ENCODE measurements at regions of chr10 and their contacts with region 1.

Region 1: DNA sequence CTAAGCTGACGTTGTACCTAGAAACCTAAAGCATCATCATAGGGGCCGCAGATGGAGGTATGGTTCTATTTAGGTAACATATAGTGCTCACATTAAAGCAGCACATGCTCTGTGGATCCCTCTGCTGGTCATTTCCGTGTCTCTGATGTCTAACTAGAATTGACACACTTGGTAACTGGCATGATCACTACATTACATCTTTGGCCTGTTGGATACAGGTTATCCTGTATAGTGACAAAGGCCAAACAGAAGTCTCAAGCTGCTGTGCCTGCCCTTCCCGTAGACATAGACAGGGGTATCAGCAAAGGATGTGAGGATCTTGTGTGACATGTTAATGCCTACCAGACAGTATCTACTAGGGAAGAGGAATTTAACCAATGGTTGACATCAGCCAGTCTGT is 51.2 kb downstream of the KIF5B start:
- DNase-seq: peak; percentile 53
- ATAC-seq: peak; percentile 65
- H3K4me3 ChIP-seq: no peak overlapping the region
- H3K27ac ChIP-seq: no peak overlapping the region
- H3K4me1 ChIP-seq: no peaks in the 10 kb centered on the region
- H3K27me3 ChIP-seq: no peaks in the 10 kb centered on the region
- CTCF ChIP-seq: peak; percentile 58
- POLR2A ChIP-seq: no peak
- RAD21 ChIP-seq: peak; percentile 64

Region 2: DNA sequence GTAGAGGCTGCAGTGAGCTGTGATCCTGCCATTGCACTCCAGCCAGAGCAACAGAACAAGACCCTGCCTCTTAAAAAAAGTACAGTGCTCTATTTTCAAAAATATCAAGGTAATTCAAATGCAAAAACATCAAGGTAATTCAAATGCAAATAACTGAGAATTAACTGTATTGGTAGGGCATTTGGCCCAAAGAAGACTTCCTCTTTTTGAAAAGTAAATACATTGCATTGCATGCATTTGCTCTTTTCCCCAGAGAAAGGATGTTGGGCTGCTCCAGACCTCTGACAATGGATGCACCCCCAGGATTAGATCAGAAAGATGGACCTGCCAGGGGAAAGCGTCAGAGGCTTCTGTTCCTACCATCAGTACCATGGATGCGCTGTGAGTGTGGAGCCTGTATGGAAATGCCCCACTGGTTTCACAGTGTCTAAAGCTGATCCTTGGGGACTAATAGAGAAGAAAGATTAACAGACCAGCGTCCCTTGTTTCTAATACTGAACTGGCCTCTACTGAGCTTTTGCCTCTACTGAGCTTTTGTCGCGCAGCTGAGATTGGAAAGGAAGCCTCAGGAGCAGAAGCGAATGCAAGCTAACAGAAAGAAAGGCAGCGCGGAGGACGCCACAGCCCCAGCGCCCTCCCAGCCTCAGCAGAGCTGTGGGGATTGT is 1282.0 kb before region 1 on chr10:
- CTCF ChIA-PET with region 1: no interaction called
- POLR2A ChIA-PET with region 1: no interaction called
- dilution Hi-C with region 1: no loop called
- in situ Hi-C with region 1: no loop called
- intact Hi-C with region 1: loop called (anchors 10 kb)
- DNase-seq: no peak
- ATAC-seq: no peak
- H3K4me3 ChIP-seq: no peak overlapping the region
- H3K27ac ChIP-seq: no peak overlapping the region
- H3K4me1 ChIP-seq: peaks cover 2% of the 10 kb centered on the region; the same call in 1 of the 2 replicates
- H3K27me3 ChIP-seq: peaks cover 5% of the 10 kb centered on the region
- CTCF ChIP-seq: no peak
- POLR2A ChIP-seq: no peak
- RAD21 ChIP-seq: no peak

Region 3: GRCh38 chr10:31836569-31837406 is 168.3 kb before region 1 on chr10:
- CTCF ChIA-PET with region 1: no interaction called
- POLR2A ChIA-PET with region 1: no interaction called
- dilution Hi-C with region 1: no loop called
- in situ Hi-C with region 1: no loop called
- intact Hi-C with region 1: loop called (anchors 5 kb)
- DNase-seq: peak; percentile 48
- ATAC-seq: peak; percentile 65
- H3K4me3 ChIP-seq: no peak overlapping the region
- H3K27ac ChIP-seq: no peak overlapping the region
- H3K4me1 ChIP-seq: no peaks in the 10 kb centered on the region
- H3K27me3 ChIP-seq: no peaks in the 10 kb centered on the region
- CTCF ChIP-seq: peak; percentile 71
- POLR2A ChIP-seq: no peak
- RAD21 ChIP-seq: peak; percentile 80

Region 4: GRCh38 chr10:31855033-31855432 is 150.0 kb before region 1 on chr10:
- CTCF ChIA-PET with region 1: no interaction called
- POLR2A ChIA-PET with region 1: no interaction called
- dilution Hi-C with region 1: no loop called
- in situ Hi-C with region 1: loop called (anchors 5 kb)
- intact Hi-C with region 1: no loop called
- DNase-seq: no peak
- ATAC-seq: no peak
- H3K4me3 ChIP-seq: no peak overlapping the region
- H3K27ac ChIP-seq: no peak overlapping the region
- H3K4me1 ChIP-seq: no peaks in the 10 kb centered on the region
- H3K27me3 ChIP-seq: no peaks in the 10 kb centered on the region
- CTCF ChIP-seq: no peak
- POLR2A ChIP-seq: no peak
- RAD21 ChIP-seq: no peak

Region 5: GRCh38 chr10:31864834-31865518 is 140.1 kb before region 1 on chr10:
- CTCF ChIA-PET with region 1: interaction called, 5 read pairs
- POLR2A ChIA-PET with region 1: no interaction called
- dilution Hi-C with region 1: no loop called
- in situ Hi-C with region 1: no loop called
- intact Hi-C with region 1: loop called (anchors 2 kb)
- DNase-seq: peak; percentile 54
- ATAC-seq: peak; percentile 69
- H3K4me3 ChIP-seq: peak overlapping the region; percentile 22; the same call in 1 of the 2 replicates
- H3K27ac ChIP-seq: no peak overlapping the region
- H3K4me1 ChIP-seq: peaks cover 6% of the 10 kb centered on the region
- H3K27me3 ChIP-seq: no peaks in the 10 kb centered on the region
- CTCF ChIP-seq: no peak
- POLR2A ChIP-seq: no peak
- RAD21 ChIP-seq: no peak

Region 6: GRCh38 chr10:31928549-31929260 is 76.3 kb before region 1 on chr10 and contains the start of gene ARHGAP12:
- CTCF ChIA-PET with region 1: interaction called, 4 read pairs
- POLR2A ChIA-PET with region 1: no interaction called
- dilution Hi-C with region 1: no loop called
- in situ Hi-C with region 1: no loop called
- intact Hi-C with region 1: loop called (anchors 1 kb)
- DNase-seq: peak; percentile 77
- ATAC-seq: peak; percentile 85
- H3K4me3 ChIP-seq: peak within 1 kb of the TSS; percentile 71
- H3K27ac ChIP-seq: peak within 1 kb of the TSS; percentile 91
- H3K4me1 ChIP-seq: peaks cover 4% of the 10 kb centered on the region
- H3K27me3 ChIP-seq: no peaks in the 10 kb centered on the region
- CTCF ChIP-seq: no peak
- POLR2A ChIP-seq: peak; percentile 85
- RAD21 ChIP-seq: no peak
- total RNA-seq, gene ARHGAP12: 28.5 and 42.2 TPM in 2 replicates

Region 7: DNA sequence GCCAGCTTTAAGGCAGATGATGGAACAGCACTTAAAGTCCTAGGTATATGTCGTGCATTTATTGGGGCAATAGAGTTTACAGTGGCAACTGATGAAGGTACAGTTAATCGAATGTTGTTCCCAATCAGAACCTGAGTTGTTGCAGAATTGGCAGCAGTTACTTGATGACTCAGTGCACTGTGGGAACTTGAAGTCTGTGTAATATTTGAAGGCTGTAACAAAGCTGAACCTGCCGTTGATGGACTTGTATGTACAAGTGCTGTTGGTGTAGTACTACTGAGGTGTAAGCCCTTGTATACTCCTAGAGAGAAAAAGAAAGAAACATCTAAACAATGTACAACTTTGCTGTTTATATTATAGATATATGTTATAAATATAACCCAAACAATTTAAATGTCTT is 266.6 kb after region 1 on chr10:
- CTCF ChIA-PET with region 1: no interaction called
- POLR2A ChIA-PET with region 1: no interaction called
- dilution Hi-C with region 1: no loop called
- in situ Hi-C with region 1: no loop called
- intact Hi-C with region 1: no loop called
- DNase-seq: peak; percentile 64
- ATAC-seq: no peak
- H3K4me3 ChIP-seq: no peak overlapping the region
- H3K27ac ChIP-seq: no peak overlapping the region
- H3K4me1 ChIP-seq: peaks cover 2% of the 10 kb centered on the region; the same call in 1 of the 2 replicates
- H3K27me3 ChIP-seq: no peaks in the 10 kb centered on the region
- CTCF ChIP-seq: no peak
- POLR2A ChIP-seq: no peak
- RAD21 ChIP-seq: no peak

Region 8: DNA sequence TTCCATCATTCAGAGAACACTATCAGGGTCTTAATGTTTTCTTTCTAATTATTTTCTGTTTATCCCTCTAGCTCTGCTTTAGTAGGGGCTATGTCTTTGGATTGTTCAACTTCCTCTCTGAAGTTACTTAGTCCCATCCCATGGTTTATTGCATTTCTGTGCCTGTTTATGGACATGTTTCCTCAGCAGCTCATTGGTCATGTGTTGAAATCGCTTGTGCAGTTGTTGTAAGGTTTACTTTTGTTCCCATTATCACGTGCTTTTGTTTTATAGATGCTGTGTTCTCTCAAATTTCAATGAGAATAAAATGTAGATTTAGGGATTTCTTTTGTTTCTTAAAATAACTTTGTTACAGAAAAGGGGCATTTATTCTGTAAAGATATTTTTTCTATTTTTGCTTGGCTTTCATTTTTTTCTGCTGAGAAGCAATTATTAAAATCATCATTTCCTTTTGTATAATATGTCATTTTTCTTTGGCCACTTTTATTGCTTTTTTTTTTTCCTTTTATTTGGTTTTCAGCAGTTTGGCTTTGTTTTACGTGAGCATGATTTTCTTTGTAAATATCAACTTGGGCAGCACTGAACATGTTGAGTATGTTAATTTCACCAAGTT is 551.8 kb after region 1 on chr10:
- CTCF ChIA-PET with region 1: no interaction called
- POLR2A ChIA-PET with region 1: no interaction called
- dilution Hi-C with region 1: no loop called
- in situ Hi-C with region 1: no loop called
- intact Hi-C with region 1: no loop called
- DNase-seq: no peak
- ATAC-seq: no peak
- H3K4me3 ChIP-seq: no peak overlapping the region
- H3K27ac ChIP-seq: no peak overlapping the region
- H3K4me1 ChIP-seq: no peaks in the 10 kb centered on the region
- H3K27me3 ChIP-seq: no peaks in the 10 kb centered on the region
- CTCF ChIP-seq: no peak
- POLR2A ChIP-seq: no peak
- RAD21 ChIP-seq: no peak